ENCODE measurements at regions of chr1 and their contacts with region 1.

Region 1: DNA sequence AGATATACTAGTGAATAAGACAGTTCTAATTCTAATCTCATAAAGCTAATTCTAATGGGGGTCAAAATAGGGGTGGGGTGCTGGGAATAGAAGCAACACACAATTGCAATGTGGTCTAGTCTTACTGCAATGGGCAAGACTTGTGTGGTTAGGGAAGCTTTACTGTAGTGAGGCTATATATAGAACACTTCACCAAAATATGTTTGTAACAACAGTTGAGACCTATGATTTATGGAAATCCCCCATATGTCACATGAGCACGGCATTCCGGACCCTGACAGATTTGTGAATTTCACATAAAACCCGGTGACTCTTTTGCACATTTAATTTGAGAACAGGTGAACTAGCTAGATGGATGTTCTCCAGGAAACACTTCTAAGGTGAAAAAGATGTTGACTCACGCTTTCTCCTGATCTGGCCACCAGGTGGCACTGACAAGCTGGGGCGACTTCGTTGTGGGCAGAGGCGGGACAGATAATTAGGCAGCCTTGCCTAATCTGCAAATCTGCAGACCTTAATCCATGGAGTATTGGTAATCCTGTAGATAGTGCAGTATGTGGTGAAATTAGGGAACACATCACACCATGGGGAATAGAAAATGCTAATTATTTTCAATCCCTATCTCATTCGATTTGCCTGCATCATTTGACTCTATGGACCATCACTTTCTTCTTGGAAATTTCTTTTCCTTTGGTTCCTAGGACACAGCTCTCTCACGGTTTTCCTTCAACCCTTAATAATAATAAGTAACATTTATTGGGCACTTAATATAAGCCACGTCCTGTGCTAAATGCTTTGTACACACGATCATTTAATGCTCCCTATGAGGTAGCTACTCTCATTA is 37.7 kb downstream of the KIAA0040 start:
- DNase-seq: peak; percentile 72
- H3K4me3 ChIP-seq: no peak overlapping the region
- H3K27ac ChIP-seq: no peak overlapping the region
- H3K4me1 ChIP-seq: no peaks in the 10 kb centered on the region
- H3K27me3 ChIP-seq: peaks cover 0 to 20% of the 10 kb centered on the region in 2 experiments
- CTCF ChIP-seq: peak; percentile 78 to 80
- POLR2A ChIP-seq: no peak

Region 2: GRCh38 chr1:175169305-175170018 is 14.6 kb after region 1 on chr1:
- CTCF ChIA-PET with region 1: interaction called, 41 read pairs
- POLR2A ChIA-PET with region 1: no interaction called
- dilution Hi-C with region 1: no loop called
- intact Hi-C with region 1: loop called (anchors 1 kb)
- DNase-seq: peak; percentile 94
- H3K4me3 ChIP-seq: peak overlapping the region in 1 of 3 experiments; percentile 40
- H3K27ac ChIP-seq: peak overlapping the region; percentile 99
- H3K4me1 ChIP-seq: peaks cover 32% of the 10 kb centered on the region
- H3K27me3 ChIP-seq: no peaks in the 10 kb centered on the region
- CTCF ChIP-seq: no peak
- POLR2A ChIP-seq: peak; percentile 56

Region 3: GRCh38 chr1:175221666-175222175 is 66.9 kb after region 1 on chr1:
- CTCF ChIA-PET with region 1: interaction called, 55 read pairs
- POLR2A ChIA-PET with region 1: no interaction called
- dilution Hi-C with region 1: no loop called
- intact Hi-C with region 1: loop called (anchors 1 kb)
- DNase-seq: peak; percentile 43
- H3K4me3 ChIP-seq: no peak overlapping the region
- H3K27ac ChIP-seq: no peak overlapping the region
- H3K4me1 ChIP-seq: peaks cover 7% of the 10 kb centered on the region
- H3K27me3 ChIP-seq: no peaks in the 10 kb centered on the region
- CTCF ChIP-seq: peak; percentile 7 to 12
- POLR2A ChIP-seq: no peak

Region 4: DNA sequence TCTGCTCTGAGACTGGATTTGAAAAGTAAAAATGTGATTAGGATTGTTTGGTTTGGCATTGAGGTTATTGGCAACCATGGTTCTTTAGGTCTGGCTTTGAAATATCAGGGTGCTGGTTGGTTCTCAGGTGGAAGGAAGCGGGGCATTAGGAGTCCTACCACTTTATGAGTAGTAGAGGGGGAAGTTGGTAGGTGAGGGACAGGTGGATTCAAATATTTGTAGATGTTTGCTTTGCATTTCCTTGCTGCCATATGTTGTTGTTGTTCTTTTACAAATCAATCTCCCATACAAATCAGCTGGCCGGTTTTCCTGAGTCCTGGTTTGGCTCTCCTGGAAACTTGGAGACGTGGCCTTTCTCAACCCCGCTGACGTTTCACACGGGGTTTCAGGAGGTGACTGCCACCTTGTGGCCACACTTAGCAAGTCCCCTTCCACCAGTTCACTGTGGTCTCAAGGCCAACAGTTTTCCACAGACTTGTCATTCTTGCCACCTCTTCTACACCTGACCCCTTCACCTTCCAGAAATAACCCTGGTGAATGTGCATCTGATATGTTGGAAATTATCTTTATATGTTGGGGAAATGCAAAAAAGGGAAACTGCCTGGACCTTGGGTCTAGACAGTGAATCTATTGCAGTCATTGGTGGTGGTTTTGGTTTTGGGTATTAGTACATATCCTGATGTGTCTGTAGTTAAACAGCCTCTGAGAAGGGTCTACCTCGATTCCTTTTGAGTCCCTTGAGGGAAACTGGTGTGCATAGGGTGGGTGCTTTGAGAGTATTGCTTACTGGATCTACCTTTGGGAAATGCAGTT is 164.8 kb after region 1 on chr1:
- CTCF ChIA-PET with region 1: interaction called, 387 read pairs
- POLR2A ChIA-PET with region 1: interaction called, 4 read pairs
- dilution Hi-C with region 1: loop called (anchors 10 kb)
- intact Hi-C with region 1: loop called (anchors 1 kb)
- DNase-seq: peak; percentile 75
- H3K4me3 ChIP-seq: no peak overlapping the region
- H3K27ac ChIP-seq: no peak overlapping the region
- H3K4me1 ChIP-seq: peaks cover 12% of the 10 kb centered on the region
- H3K27me3 ChIP-seq: peaks cover 2 to 3% of the 10 kb centered on the region in 2 experiments
- CTCF ChIP-seq: peak; percentile 85 to 88
- POLR2A ChIP-seq: no peak

Region 5: GRCh38 chr1:175373786-175374623 is 219.2 kb after region 1 on chr1:
- CTCF ChIA-PET with region 1: interaction called, 57 read pairs
- POLR2A ChIA-PET with region 1: no interaction called
- dilution Hi-C with region 1: no loop called
- intact Hi-C with region 1: loop called (anchors 1 kb)
- DNase-seq: peak; percentile 38
- H3K4me3 ChIP-seq: no peak overlapping the region
- H3K27ac ChIP-seq: no peak overlapping the region
- H3K4me1 ChIP-seq: no peaks in the 10 kb centered on the region
- H3K27me3 ChIP-seq: peaks cover 0 to 3% of the 10 kb centered on the region in 2 experiments
- CTCF ChIP-seq: peak; percentile 73 to 82
- POLR2A ChIP-seq: no peak

Region 6: DNA sequence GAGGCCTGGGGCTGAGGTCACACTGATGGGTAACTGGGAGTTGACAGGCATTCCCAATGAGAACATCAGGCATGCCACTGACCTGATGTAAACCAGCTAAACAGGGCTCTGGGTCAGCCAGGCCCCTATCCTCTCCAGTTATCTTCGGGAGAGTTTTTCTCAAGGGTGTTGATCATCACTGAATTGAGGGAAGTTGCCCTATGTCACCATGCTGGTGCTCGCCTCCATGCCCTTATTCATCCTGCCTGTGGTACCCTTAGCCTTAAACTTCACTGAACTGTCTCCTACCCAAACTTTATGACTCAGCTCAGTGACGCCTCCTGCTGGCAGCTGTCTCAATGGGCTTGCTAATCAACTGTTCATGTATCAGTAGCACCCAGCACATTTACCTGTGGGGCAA is 669.2 kb after region 1 on chr1:
- CTCF ChIA-PET with region 1: interaction called, 11 read pairs
- POLR2A ChIA-PET with region 1: no interaction called
- dilution Hi-C with region 1: no loop called
- intact Hi-C with region 1: no loop called
- DNase-seq: peak; percentile 41
- H3K4me3 ChIP-seq: no peak overlapping the region
- H3K27ac ChIP-seq: no peak overlapping the region
- H3K4me1 ChIP-seq: no peaks in the 10 kb centered on the region
- H3K27me3 ChIP-seq: no peaks in the 10 kb centered on the region
- CTCF ChIP-seq: peak; percentile 50 to 54
- POLR2A ChIP-seq: no peak

Region 7: DNA sequence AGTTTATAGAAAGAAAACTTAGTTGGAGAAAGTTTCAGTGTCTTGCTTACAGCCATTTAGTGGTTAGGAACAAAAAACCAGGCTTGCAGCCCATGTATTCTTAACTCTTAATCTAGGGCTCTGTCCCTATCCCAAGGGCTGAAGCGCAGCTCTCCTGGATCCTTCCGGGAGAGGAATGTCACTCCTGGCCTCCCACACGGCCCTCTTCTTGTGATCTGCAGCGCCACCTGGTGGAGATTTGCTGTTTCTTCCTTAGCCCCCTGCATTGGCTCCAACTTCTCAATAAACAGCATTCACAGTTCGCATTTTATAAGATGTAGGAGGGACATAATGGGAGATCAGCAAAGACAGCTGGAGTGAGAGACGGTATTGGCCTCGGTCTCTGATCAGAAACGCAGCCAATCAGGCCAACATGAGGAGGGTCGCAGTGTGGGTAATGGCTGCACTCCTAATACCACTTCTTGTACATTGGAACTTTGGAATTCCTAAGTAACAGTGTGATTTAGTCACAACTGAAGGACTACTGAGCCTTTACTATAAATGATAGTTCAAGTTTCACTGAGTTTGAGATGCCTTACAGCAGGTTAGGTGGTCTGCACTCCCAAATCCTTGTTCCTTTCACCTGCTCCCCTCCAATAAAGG is 1726.2 kb after region 1 on chr1:
- CTCF ChIA-PET with region 1: interaction called, 14 read pairs
- POLR2A ChIA-PET with region 1: no interaction called
- dilution Hi-C with region 1: no loop called
- intact Hi-C with region 1: no loop called
- DNase-seq: peak; percentile 46
- H3K4me3 ChIP-seq: no peak overlapping the region
- H3K27ac ChIP-seq: no peak overlapping the region
- H3K4me1 ChIP-seq: no peaks in the 10 kb centered on the region
- H3K27me3 ChIP-seq: no peaks in the 10 kb centered on the region
- CTCF ChIP-seq: peak; percentile 79
- POLR2A ChIP-seq: no peak